ENCODE measurements at regions of chr18 and their contacts with region 1.

Region 1: GRCh38 chr18:63518178-63519012 is 23.8 kb upstream of the SERPINB12 start:
- DNase-seq: peak; percentile 49
- H3K4me3 ChIP-seq: no peak overlapping the region
- H3K27ac ChIP-seq: no peak overlapping the region
- H3K27me3 ChIP-seq: peaks cover 9% of the 10 kb centered on the region
- CTCF ChIP-seq: peak; percentile 68

Region 2: DNA sequence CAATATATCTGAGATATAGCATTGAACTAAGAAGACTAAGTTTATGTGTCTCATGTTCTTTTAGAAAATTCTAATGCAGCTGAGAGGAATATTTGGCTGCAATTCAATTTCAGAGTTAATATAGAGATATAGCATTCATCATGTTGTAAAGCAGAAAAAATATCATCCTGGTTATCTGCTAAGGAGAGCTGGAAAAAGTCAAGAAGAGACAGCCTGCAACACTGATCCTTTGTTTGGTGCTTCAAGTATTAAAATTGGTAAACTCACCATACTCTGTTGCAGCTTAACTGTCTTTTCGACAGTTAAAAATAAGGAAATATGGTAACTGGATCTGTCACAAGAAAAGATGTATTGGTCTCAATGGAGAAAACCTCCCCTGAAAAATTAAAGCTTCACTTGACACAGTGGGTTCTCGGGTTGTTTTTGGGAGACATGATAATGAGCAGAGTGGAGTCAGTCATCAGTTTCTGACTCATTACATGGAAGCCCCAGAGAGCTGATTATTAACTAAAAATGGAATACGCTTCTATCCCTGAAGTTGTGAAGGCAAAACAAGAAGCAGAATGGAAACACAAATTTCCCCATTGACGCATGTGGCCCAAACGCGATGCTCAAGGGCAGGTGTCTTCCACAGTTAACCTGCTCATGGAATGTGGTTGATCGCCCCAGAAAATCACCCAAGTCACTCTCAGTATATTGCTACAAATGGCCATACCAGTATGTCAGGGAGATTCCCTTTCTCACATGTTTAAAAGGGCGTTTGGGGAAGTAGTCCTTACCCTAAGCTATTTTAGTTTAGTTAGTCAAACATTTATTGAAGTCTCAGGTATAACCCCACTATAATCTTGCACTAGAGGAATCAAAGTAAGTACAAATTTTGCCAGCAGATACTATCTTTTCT is 207.0 kb before region 1 on chr18:
- CTCF ChIA-PET with region 1: no interaction called
- POLR2A ChIA-PET with region 1: no interaction called
- DNase-seq: no peak
- H3K4me3 ChIP-seq: no peak overlapping the region
- H3K27ac ChIP-seq: no peak overlapping the region
- H3K27me3 ChIP-seq: peaks cover 6% of the 10 kb centered on the region
- CTCF ChIP-seq: no peak

Region 3: GRCh38 chr18:63350230-63350629 is 168.2 kb before region 1 on chr18:
- CTCF ChIA-PET with region 1: no interaction called
- POLR2A ChIA-PET with region 1: no interaction called
- DNase-seq: no peak
- H3K4me3 ChIP-seq: no peak overlapping the region
- H3K27ac ChIP-seq: no peak overlapping the region
- H3K27me3 ChIP-seq: no peaks in the 10 kb centered on the region
- CTCF ChIP-seq: no peak

Region 4: DNA sequence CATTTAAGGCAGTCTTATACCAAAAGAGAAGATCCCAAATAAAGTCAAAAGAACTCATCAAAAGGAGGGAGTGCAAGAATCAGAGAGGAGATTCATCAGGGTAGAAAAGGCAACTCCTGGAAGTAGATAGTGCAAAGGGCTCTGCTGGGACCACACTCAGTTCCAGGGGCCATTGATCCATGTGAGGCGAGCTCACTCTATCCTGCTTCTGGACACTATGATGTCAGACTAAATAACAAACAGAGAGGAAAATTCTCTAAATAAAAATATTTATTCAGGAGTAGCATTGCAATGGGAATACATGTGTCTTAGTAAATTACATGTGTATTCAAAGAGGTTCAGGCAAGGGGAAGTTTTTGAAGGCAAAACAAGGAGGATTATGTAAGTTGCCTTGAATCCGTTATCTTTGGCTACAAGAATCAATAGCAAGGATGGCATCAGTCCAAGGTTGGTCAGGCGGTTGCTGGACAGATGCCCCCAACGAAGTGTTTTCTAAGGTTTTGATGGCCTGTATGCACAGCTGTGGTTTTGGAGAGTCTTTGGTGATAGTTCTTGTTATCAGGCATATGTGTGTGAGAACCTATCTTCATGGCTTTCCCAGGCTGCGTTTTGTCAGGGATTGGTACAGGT is 10.6 kb after region 1 on chr18:
- CTCF ChIA-PET with region 1: interaction called, 11 read pairs
- POLR2A ChIA-PET with region 1: no interaction called
- DNase-seq: no peak
- H3K4me3 ChIP-seq: no peak overlapping the region
- H3K27ac ChIP-seq: no peak overlapping the region
- H3K27me3 ChIP-seq: no peaks in the 10 kb centered on the region
- CTCF ChIP-seq: no peak

Region 5: GRCh38 chr18:63562284-63562683 is 43.9 kb after region 1 on chr18:
- CTCF ChIA-PET with region 1: interaction called, 15 read pairs
- POLR2A ChIA-PET with region 1: no interaction called
- DNase-seq: no peak
- H3K4me3 ChIP-seq: no peak overlapping the region
- H3K27ac ChIP-seq: no peak overlapping the region
- H3K27me3 ChIP-seq: no peaks in the 10 kb centered on the region
- CTCF ChIP-seq: no peak

Region 6: DNA sequence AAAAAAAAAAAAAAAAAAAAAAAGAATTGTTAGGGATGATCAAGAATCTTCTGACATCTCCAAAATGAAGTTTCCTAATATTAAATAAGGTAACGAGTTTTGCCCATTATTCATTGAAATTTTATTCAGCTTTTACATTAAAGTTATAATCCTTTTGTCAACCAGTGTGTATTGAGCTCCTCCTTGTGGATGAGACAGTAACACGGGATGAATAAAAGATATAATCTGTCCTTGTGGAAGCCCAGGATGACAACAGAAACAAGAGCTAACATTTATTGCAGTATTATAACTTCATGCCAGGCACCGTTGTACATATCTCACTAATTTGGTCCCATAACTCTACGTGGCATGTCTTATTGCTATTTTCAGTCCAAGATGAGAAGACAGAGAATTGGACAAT is 223.4 kb after region 1 on chr18:
- CTCF ChIA-PET with region 1: interaction called, 246 read pairs
- POLR2A ChIA-PET with region 1: interaction called, 5 read pairs
- DNase-seq: no peak
- H3K4me3 ChIP-seq: no peak overlapping the region
- H3K27ac ChIP-seq: no peak overlapping the region
- H3K27me3 ChIP-seq: no peaks in the 10 kb centered on the region
- CTCF ChIP-seq: peak; percentile 69

Region 7: GRCh38 chr18:63837556-63837955 is 319.2 kb after region 1 on chr18:
- CTCF ChIA-PET with region 1: interaction called, 272 read pairs
- POLR2A ChIA-PET with region 1: no interaction called
- DNase-seq: no peak
- H3K4me3 ChIP-seq: no peak overlapping the region
- H3K27ac ChIP-seq: no peak overlapping the region
- H3K27me3 ChIP-seq: no peaks in the 10 kb centered on the region
- CTCF ChIP-seq: no peak

Region 8: GRCh38 chr18:63936156-63936931 is 417.9 kb after region 1 on chr18:
- CTCF ChIA-PET with region 1: interaction called, 28 read pairs
- POLR2A ChIA-PET with region 1: no interaction called
- DNase-seq: no peak
- H3K4me3 ChIP-seq: peak overlapping the region; percentile 68
- H3K27ac ChIP-seq: no peak overlapping the region
- H3K27me3 ChIP-seq: peaks cover 12% of the 10 kb centered on the region
- CTCF ChIP-seq: peak; percentile 70